ENCODE measurements at regions of chrX and their contacts with region 1.

Region 1: GRCh38 chrX:49100704-49101628 is 21.3 kb upstream of the WDR45 start:
- DNase-seq: peak; percentile 72 to 93 (median 84)
- ATAC-seq: peak; percentile 92 to 95 (median 94)
- H3K4me3 ChIP-seq: peak overlapping the region; percentile 52 to 65
- H3K4me3 Mint-ChIP-seq: peak overlapping the region; percentile 77 to 87 (median 85)
- H3K27ac ChIP-seq: peak overlapping the region; percentile 73
- H3K27ac Mint-ChIP-seq: peak overlapping the region; percentile 88 to 93
- H3K4me1 ChIP-seq: peaks cover 0 to 17% of the 10 kb centered on the region in 2 experiments
- H3K4me1 Mint-ChIP-seq: peaks cover 0 to 8% (median 0%) of the 10 kb centered on the region in 3 donors
- H3K27me3 ChIP-seq: no peaks in the 10 kb centered on the region
- H3K27me3 Mint-ChIP-seq: peaks cover 0 to 4% of the 10 kb centered on the region in 2 donors

Region 2: DNA sequence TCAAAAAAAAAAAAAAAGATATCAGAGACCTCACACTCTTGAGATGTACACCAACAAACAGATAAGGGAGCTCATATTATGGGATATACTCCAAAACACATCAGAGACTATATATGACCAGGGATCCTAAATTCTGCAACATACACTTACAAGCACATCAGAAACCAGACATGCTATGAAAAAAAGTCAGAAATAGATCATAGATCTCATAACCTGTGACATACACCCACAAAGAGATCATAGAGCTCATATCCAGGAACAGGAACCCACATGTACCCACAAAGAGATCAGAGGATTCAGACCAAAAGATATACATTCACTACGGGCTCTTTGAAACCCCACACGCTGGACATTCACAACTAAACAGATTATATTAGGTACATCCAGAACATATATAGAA is 374.4 kb before region 1 on chrX:
- CTCF ChIA-PET with region 1: no interaction called
- POLR2A ChIA-PET with region 1: no interaction called
- DNase-seq: peak in 1 of 35 experiments; percentile 14
- ATAC-seq: peak in 3 of 4 experiments; percentile 44 to 86 (median 49)
- H3K4me3 ChIP-seq: no peak overlapping the region
- H3K4me3 Mint-ChIP-seq: peak overlapping the region in 1 of 3 donors; percentile 37
- H3K27ac ChIP-seq: no peak overlapping the region
- H3K27ac Mint-ChIP-seq: peak overlapping the region in 1 of 2 donors; percentile 66
- H3K4me1 ChIP-seq: peaks cover 0 to 19% of the 10 kb centered on the region in 2 experiments
- H3K4me1 Mint-ChIP-seq: peaks cover 27 to 49% (median 29%) of the 10 kb centered on the region in 3 donors
- H3K27me3 ChIP-seq: no peaks in the 10 kb centered on the region
- H3K27me3 Mint-ChIP-seq: no peaks in the 10 kb centered on the region

Region 3: DNA sequence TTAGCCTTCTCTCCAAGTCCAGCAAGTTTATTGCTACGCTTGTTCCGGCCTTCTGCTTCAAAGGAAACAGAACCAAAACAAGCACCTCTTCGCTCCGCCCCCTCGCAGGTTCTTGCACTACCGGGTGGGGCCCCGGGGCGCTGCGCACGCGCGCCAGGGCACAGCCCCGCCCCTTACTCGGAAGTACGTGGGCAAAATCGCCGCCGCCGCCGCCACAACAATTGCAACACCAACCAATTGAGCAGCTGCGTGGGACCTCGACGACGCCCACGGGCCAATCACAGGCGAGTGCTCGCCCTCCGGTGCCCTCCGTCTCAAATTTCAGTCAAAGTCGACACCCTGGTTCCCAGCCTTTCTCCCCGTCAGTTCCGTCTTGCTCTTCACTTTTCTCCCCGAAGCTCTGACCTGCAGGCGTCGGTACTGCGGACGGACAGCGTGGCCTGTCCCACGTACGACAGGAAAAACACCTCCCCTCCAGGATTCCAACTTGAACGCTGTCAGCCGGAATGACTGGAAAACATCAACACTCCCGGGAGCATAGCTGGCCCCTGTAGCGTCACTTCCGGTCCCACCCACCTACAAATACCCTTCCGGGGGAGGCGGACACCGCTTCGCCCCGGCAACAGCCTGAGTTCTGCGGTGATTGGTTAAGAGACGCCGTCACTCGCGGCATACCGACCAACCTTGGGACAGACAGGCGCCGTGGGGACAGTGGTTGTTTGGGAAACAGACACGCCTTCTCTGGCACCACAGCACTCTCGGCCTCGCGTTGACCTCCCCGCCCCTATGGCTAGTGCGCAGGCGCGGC is 142.9 kb before region 1 on chrX:
- CTCF ChIA-PET with region 1: no interaction called
- POLR2A ChIA-PET with region 1: interaction called in 1 of 2 experiments, 19 read pairs
- DNase-seq: peak; percentile 77 to 97 (median 93)
- ATAC-seq: peak; percentile 81 to 86 (median 82)
- H3K4me3 ChIP-seq: peak overlapping the region; percentile 65 to 74
- H3K4me3 Mint-ChIP-seq: peak overlapping the region; percentile 82 to 98 (median 97)
- H3K27ac ChIP-seq: peak overlapping the region; percentile 99
- H3K27ac Mint-ChIP-seq: peak overlapping the region; percentile 100
- H3K4me1 ChIP-seq: peaks cover 11 to 44% of the 10 kb centered on the region in 2 experiments
- H3K4me1 Mint-ChIP-seq: peaks cover 37 to 51% (median 40%) of the 10 kb centered on the region in 3 donors
- H3K27me3 ChIP-seq: no peaks in the 10 kb centered on the region
- H3K27me3 Mint-ChIP-seq: peaks cover 0 to 11% of the 10 kb centered on the region in 2 donors

Region 4: DNA sequence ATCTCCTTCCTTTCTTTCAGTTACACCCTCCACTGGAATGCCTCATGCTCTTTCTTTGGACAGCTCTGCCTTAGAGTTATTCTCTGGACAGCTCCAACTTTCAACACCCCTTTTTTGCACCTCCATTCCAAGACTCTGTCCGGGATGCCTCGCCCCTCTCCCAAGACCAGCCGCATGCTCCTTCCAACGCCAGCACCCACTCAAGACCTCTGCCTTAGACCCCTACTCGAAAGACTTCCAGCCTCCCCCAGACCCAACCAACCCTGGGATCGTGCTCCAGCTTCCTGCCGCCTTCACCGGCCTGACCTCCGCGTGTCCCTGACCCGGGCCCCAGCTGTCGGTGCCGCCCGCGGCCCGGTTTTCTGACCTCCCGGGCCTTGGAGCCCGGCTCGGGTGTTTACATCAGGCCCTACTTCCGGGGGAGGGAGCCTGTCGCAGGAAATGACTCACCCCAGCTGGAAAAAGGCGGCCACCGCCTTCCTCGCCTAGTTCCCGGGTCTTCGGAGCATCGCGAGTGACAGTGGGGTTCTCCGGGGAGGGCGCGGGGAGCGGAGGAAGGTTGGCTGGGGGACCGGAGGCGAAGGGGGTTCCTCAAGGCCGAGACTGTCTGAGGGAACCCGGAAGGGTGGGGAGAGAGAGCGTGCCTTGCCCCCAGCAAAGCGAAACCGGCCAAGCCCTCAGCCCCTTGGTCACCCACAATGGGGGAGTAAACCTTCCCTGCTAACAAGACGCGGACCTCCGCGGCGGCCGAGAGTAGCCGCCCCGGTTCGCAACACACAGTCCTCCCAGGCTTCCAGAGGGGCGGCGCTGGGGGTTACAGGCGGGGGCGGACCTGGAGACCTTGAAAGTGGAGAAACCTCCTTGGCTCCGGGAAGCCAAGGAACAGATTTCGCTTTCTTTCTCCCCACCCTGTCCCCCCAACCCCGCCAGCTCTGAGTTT is 21.2 kb before region 1 on chrX and contains the start of gene WDR45:
- CTCF ChIA-PET with region 1: no interaction called
- POLR2A ChIA-PET with region 1: interaction called in 1 of 2 experiments, 11 read pairs
- DNase-seq: peak; percentile 44 to 79 (median 58)
- ATAC-seq: peak; percentile 82 to 88 (median 86)
- H3K4me3 ChIP-seq: peak within 1 kb of the TSS; percentile 67 to 78
- H3K4me3 Mint-ChIP-seq: peak within 1 kb of the TSS; percentile 77 to 98 (median 87)
- H3K27ac ChIP-seq: peak within 1 kb of the TSS; percentile 96
- H3K27ac Mint-ChIP-seq: peak within 1 kb of the TSS; percentile 99 to 100
- H3K4me1 ChIP-seq: peaks cover 0 to 13% of the 10 kb centered on the region in 2 experiments
- H3K4me1 Mint-ChIP-seq: peaks cover 9 to 16% (median 15%) of the 10 kb centered on the region in 3 donors
- H3K27me3 ChIP-seq: no peaks in the 10 kb centered on the region
- H3K27me3 Mint-ChIP-seq: no peaks in the 10 kb centered on the region
- total RNA-seq, gene WDR45: 66.2 to 134 (median 112) TPM